Posterior vena cava (tissue), 2 donors: ENCODE measurements at regions of chrX and their contacts with region 1.

Region 1: DNA sequence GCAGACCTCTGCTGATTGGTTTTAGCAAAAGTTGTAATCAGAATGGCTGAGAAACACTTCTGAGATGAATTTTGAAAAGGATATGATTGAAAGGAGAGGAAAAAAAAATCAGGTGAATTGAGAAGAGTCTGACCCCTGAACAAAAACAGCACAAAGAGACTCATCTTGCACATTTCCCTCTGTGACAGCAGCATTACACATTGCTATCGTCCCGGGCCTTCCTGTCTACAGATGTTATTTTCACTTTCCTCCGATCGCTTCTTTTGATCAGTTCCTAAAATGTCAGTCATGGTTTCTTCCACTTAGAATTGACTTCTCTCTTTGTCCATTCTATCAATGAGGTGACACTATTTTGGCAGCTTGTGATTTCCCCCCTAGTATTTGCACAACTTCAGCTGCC is 262.6 kb downstream of the GPC3 start:
- DNase-seq: no peak

Region 2: DNA sequence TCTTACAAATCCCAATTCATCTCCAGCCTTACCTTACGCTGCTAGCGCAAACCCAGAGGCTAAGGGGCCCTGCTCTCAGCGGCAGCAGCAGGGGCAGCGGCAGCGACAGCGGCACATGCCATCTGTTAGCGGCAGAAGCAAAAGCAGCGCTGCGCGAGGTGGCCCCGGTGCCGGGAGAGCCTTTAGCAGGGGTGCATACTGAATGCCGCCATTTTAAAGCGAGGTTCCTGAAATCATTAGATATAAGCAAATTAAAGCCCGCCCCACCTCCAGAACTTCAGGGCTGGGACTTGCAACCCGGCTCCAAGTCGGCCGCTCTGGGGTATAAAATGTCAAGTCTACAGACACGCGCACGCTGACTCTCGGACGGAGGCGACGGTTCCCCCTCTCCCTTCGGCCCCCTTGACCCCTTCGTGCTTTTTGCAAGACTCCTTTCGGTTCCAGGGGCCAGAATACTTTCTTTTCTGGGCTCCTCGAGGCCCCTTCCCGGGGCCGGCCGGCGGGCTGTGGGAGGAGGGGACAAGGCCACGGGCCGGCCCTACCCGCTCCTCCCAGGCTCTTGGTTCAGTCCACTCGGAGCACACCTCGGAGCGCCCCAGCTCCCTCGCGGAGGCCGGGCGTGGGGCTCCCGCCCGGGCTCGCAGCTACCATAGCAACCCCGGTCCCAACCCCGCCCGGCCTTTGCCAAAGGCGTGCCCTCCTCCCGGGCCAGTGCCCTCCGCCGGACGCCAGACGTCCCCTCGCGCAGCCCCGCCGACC is 1233.8 kb before region 1 on chrX and contains the start of gene MBNL3:
- intact Hi-C with region 1: no loop called
- DNase-seq: peak; percentile 89
- total RNA-seq, gene MBNL3: 9.4 to 15.9 TPM

Region 3: DNA sequence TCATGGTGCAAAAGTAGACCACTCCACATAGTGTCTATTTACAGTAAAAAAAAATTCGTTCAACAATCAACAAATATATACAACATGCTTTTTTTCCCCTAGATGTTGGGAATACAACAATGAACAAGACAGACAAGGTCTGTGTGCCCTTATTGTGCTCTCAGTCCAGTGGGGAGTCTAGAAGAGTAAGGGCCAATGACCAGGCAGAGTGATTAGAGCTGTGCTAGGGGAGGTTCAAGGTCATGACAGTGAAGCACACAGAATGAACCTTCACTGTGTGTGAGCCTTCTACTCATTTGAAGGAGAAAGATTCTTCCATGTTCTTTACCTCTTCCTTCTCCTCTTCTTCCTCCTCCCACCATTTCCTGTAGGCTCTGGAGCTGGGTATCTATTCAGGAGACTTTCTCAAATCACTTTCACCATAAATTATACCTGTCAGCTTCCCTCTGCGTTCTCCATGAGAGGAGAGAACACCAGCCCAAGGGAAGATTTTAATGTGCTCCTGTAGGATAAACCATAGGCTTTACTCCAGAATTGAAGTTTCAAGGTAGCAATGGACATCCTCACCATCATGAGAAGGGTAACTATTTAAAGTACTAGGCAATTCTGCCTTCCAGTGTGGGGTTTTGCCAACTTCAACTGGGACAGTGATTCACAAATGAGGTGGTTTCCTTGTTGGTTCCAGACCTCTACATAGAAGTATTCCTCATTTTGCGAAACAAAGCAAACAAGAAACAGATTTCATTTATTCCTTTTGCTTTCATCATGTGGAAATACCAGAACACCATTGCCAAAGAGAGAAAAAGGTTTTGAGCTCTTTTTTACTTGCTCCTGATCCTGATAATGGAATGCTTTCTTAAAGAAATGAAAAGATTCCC is 60.6 kb before region 1 on chrX:
- intact Hi-C with region 1: loop called in 1 of 2 experiments (anchors 2 kb)
- DNase-seq: no peak